Activated CD4-positive, alpha-beta T cell treated with anti-CD3 and anti-CD28 coated beads, Interleukin-2, amount 10 ng/mL, durations not matched to agents 24 days and 14 days (primary cell): ENCODE measurements at regions of chr14 and their contacts with region 1.

Region 1: GRCh38 chr14:100213956-100214774 is 24.8 kb upstream of the YY1 start:
- DNase-seq: peak; percentile 97
- H3K4me3 Mint-ChIP-seq: peak overlapping the region; percentile 74
- H3K27ac Mint-ChIP-seq: peak overlapping the region; percentile 88
- H3K4me1 Mint-ChIP-seq: peaks cover 19% of the 10 kb centered on the region
- H3K27me3 Mint-ChIP-seq: no peaks in the 10 kb centered on the region

Region 2: GRCh38 chr14:100159094-100159864 is 54.9 kb before region 1 on chr14 and contains the start of gene DEGS2:
- intact Hi-C with region 1: loop called (anchors 2 kb)
- DNase-seq: peak; percentile 82
- H3K4me3 Mint-ChIP-seq: peak within 1 kb of the TSS; percentile 71
- H3K27ac Mint-ChIP-seq: no peak within 1 kb of the TSS
- H3K4me1 Mint-ChIP-seq: no peaks in the 10 kb centered on the region
- H3K27me3 Mint-ChIP-seq: peaks cover 34% of the 10 kb centered on the region
- total RNA-seq, gene DEGS2: 0.09 and 0.35 TPM in 2 replicates